WTC11 (cell line): ENCODE measurements at regions of chr7 and their contacts with region 1.

Region 1: DNA sequence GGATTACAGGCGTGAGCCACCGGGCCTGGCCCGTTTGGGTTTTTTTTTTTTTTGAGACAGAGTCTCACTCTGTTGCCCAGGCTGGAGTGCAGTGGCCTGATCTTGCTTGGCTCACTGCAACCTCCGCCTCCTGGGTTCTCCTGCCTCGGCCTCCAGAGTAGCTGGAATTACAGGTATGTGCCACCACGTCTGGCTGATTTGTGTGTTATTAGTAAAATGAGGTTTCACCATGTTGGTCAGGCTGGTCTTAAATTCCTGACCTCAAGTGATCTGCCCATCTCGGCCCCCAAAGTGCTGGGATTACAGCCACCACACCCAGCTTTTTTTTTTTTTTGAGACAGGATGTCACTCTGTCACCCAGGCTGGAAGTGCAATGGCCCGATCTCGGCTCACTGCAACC is 5.9 kb upstream of the BAIAP2L1 start:
- DNase-seq: no peak
- ATAC-seq: no peak
- H3K4me3 Mint-ChIP-seq: no peak overlapping the region
- H3K27ac Mint-ChIP-seq: no peak overlapping the region
- H3K4me1 Mint-ChIP-seq: peaks cover 2% of the 10 kb centered on the region; the same call in 1 of the 2 replicates
- H3K27me3 Mint-ChIP-seq: no peaks in the 10 kb centered on the region; the same call in 1 of the 2 replicates
- CTCF ChIP-seq: no peak

Region 2: DNA sequence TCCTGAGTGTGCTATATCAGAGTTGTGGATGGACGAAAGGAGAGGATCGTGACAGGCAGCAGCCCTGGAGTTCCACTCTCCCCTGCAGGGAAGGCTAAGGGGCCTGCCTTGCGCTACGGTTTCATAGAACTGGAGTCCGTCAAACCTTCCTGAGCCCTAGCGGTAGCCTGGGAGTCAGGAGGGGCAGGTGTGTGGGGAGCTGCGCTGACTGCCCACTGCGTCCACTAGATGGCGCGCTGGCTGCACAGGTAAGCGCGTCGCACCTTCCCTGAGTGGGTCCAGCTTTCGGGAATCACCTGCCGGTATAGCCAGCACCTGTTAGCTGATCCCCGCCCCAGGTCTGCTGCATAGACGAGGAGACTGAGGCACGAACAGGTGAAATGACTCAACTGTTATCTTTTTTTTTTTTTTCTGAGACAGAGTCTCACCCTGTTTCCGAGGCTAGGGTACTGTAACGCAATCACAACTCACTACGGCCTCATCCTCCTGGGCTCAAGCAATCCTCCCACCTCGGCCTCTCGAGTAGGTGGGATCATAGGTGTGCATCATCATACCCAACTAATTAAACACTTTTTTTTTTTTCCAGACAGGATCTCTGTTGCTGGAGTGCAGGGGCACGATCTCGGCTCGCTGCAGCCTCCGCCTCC is 14.3 kb after region 1 on chr7:
- CTCF ChIA-PET with region 1: interaction called, 11 read pairs
- POLR2A ChIA-PET with region 1: no interaction called
- DNase-seq: peak; percentile 93
- ATAC-seq: peak; percentile 99
- H3K4me3 Mint-ChIP-seq: no peak overlapping the region
- H3K27ac Mint-ChIP-seq: no peak overlapping the region
- H3K4me1 Mint-ChIP-seq: no peaks in the 10 kb centered on the region
- H3K27me3 Mint-ChIP-seq: peaks cover 13% of the 10 kb centered on the region
- CTCF ChIP-seq: peak; percentile 92

Region 3: GRCh38 chr7:98733036-98733435 is 326.2 kb after region 1 on chr7:
- CTCF ChIA-PET with region 1: no interaction called
- POLR2A ChIA-PET with region 1: no interaction called
- DNase-seq: peak; percentile 87
- ATAC-seq: peak; percentile 89
- H3K4me3 Mint-ChIP-seq: no peak overlapping the region
- H3K27ac Mint-ChIP-seq: no peak overlapping the region
- H3K4me1 Mint-ChIP-seq: peaks cover 21% of the 10 kb centered on the region
- H3K27me3 Mint-ChIP-seq: no peaks in the 10 kb centered on the region
- CTCF ChIP-seq: peak; percentile 78